ENCODE measurements at regions of chr20 and their contacts with region 1.

Region 1: GRCh38 chr20:4091490-4092479 is 76.4 kb upstream of the RNF24 start:
- DNase-seq: peak; percentile 71 to 89
- ATAC-seq: no peak
- H3K4me3 ChIP-seq: no peak overlapping the region
- H3K27ac ChIP-seq: no peak overlapping the region
- H3K4me1 ChIP-seq: no peaks in the 10 kb centered on the region
- H3K27me3 ChIP-seq: no peaks in the 10 kb centered on the region

Region 2: GRCh38 chr20:3888622-3889488 is 202.9 kb before region 1 on chr20 and contains the start of gene PANK2:
- intact Hi-C with region 1: loop called in 1 of 2 experiments (anchors 2 kb)
- DNase-seq: peak; percentile 100
- ATAC-seq: peak; percentile 98
- H3K4me3 ChIP-seq: peak within 1 kb of the TSS; percentile 88 to 89
- H3K27ac ChIP-seq: peak within 1 kb of the TSS; percentile 85 to 86
- H3K4me1 ChIP-seq: no peaks in the 10 kb centered on the region
- H3K27me3 ChIP-seq: no peaks in the 10 kb centered on the region
- total RNA-seq, gene PANK2: 45.7 to 53.2 TPM

Region 3: DNA sequence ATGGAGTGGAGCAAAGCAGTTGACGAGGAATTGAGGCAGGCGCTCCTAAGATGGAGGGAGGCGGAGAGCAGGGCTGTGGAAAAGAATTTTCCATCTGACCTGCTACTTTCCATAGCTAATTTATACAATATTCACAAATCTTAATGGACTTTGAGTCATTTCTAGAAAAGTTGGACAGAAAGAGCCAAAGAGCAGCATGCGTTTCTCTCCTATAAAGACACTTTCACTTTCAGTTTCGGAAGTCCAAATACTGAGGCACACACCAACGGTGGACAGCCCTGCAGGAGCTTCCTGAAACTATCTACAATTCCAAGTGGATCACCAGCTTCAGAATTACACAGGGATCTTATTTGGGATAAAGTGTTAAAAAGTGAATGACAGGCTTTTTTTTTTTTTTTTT is 159.1 kb before region 1 on chr20:
- intact Hi-C with region 1: loop called (anchors 5 to 10 kb)
- DNase-seq: no peak
- ATAC-seq: no peak
- H3K4me3 ChIP-seq: peak overlapping the region in 1 of 2 donors; percentile 36
- H3K27ac ChIP-seq: peak overlapping the region; percentile 64 to 68
- H3K4me1 ChIP-seq: peaks cover 7 to 10% of the 10 kb centered on the region in 2 donors
- H3K27me3 ChIP-seq: no peaks in the 10 kb centered on the region

Region 4: DNA sequence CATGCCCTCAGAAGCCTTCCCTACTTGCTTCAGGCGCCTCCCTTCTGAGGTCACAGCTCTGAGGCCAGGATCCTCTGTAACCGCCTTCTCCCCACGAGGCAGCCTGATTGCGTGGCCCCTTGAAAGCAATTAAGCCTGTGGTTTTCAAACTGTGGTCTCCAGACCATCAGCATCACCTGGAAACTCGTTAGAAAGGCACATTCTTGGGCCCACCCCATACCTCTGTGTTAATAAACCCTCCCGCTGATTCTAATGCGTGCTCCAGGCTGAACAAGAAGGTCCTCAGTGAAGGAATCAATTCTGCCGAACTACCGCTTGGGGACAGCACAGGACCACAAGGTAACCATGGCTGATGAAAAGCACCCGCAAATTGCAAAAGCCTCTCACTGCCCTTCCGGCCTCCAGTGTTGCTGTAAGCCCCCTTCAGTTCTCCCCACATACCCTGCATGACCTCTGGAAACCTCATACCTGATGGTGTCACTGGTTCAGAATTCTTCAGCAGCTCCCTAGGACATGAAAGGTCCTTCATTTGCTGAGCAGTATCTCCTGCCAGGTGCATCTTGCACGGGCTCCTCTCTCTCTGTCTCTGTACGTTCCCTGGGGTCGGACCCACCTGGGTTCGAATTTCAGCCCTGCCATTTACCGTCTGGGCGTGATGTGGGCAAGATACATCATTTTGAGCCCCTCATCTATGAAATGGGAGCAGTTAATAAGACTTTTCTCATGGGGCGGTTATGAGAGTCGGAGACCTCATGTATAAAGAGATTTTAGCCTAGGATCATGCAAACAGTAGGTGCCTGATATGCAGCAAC is 16.9 kb after region 1 on chr20:
- intact Hi-C with region 1: no loop called
- DNase-seq: peak in 1 of 2 donors; percentile 76
- ATAC-seq: peak; percentile 79
- H3K4me3 ChIP-seq: no peak overlapping the region
- H3K27ac ChIP-seq: no peak overlapping the region
- H3K4me1 ChIP-seq: no peaks in the 10 kb centered on the region
- H3K27me3 ChIP-seq: no peaks in the 10 kb centered on the region

Region 5: DNA sequence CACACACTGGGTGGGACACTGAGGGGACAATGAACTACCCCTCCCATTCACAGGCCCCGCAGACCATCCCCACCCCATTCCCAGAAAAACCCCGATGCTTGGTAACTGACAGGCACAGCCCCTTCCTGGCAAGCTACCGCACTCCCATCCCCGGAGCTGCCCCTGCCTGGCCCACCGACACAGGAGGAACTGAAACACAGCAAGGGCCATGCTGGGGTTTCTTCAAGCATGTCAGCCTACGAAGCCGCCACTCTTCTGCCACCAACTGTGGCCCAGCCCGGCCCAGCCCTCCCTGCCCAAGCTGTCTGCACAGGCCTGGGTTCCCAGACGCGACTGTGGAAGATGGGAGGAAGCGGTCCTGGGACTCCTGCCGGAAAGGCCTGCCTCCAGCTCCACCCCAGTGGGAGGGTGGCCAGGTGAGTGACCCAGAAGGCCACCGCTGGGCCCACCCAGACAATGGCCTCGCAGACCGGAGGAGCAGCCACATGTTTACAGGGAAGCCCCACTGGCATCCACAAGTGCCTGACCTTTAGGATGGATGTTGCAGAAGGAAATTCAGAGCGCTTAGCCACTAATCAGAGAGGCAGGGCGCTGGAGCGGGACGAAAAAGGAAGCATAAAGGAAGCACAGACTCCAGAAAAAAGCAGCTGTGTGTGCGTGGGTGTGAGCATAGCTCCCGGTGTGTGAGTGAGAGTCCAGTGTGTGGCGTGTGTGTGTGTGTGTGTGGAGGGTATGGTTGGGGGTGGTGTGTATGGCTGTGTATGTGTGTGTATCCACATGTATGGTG is 721.5 kb after region 1 on chr20:
- intact Hi-C with region 1: no loop called
- DNase-seq: peak in 1 of 2 donors; percentile 65
- ATAC-seq: peak; percentile 33
- H3K4me3 ChIP-seq: no peak overlapping the region
- H3K27ac ChIP-seq: no peak overlapping the region
- H3K4me1 ChIP-seq: no peaks in the 10 kb centered on the region
- H3K27me3 ChIP-seq: no peaks in the 10 kb centered on the region

Measured in aorta (tissue), 5 donors.